HepG2 (cell line): ENCODE measurements at regions of chr3 and their contacts with region 1.

Region 1: GRCh38 chr3:101195951-101196713 is 124.2 kb downstream of the IMPG2 start:
- DNase-seq: peak; percentile 20
- ATAC-seq: peak; percentile 62
- H3K4me3 ChIP-seq: no peak overlapping the region
- H3K27ac ChIP-seq: no peak overlapping the region
- H3K4me1 ChIP-seq: no peaks in the 10 kb centered on the region
- H3K27me3 ChIP-seq: 0 out of 5 replicates have a peak, but pooled peaks cover 0 to 1% of the 10 kb centered on the region in 2 experiments
- CTCF ChIP-seq: peak; percentile 53
- EP300 ChIP-seq: no peak
- POLR2A ChIP-seq: no peak
- RAD21 ChIP-seq: no peak

Region 2: DNA sequence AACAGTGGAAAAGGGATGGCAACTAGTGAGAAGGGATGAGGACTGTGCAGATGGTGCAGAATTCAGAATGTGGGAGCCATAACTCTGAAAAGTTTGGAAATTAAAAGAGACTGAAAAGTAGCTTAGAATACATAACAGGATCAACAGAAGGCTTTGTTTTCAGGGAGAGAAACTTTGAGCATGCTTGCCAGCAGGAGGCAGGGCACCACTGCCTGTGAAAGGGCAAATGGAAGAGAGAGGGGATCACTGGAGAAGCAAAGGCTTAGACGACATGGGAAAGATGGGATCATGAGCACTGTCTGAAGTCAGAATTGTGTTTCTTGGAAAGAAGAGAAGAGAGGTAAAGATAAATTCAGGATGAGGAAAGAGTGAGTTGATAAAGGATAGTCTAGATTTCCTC is 302.5 kb before region 1 on chr3:
- CTCF ChIA-PET with region 1: no interaction called
- POLR2A ChIA-PET with region 1: no interaction called
- in situ Hi-C with region 1: no loop called
- intact Hi-C with region 1: loop called (anchors 1 kb)
- DNase-seq: peak; percentile 3
- ATAC-seq: peak; percentile 75
- H3K4me3 ChIP-seq: no peak overlapping the region
- H3K27ac ChIP-seq: no peak overlapping the region
- H3K4me1 ChIP-seq: no peaks in the 10 kb centered on the region
- H3K27me3 ChIP-seq: no peaks in the 10 kb centered on the region
- CTCF ChIP-seq: peak; percentile 55
- EP300 ChIP-seq: no peak
- POLR2A ChIP-seq: no peak
- RAD21 ChIP-seq: no peak

Region 3: GRCh38 chr3:101069901-101070798 is 126.0 kb before region 1 on chr3:
- CTCF ChIA-PET with region 1: interaction called, 5 read pairs
- POLR2A ChIA-PET with region 1: no interaction called
- in situ Hi-C with region 1: no loop called
- intact Hi-C with region 1: loop called (anchors 1 kb)
- DNase-seq: peak; percentile 31
- ATAC-seq: peak; percentile 99
- H3K4me3 ChIP-seq: no peak overlapping the region
- H3K27ac ChIP-seq: no peak overlapping the region
- H3K4me1 ChIP-seq: no peaks in the 10 kb centered on the region
- H3K27me3 ChIP-seq: no peaks in the 10 kb centered on the region; a peak in 1 of 5 replicates
- CTCF ChIP-seq: peak; percentile 79
- EP300 ChIP-seq: no peak
- POLR2A ChIP-seq: no peak
- RAD21 ChIP-seq: peak; percentile 46; the same call in 1 of the 2 replicates